HCT116 (cell line): ENCODE measurements at regions of chr11 and their contacts with region 1.

Region 1: GRCh38 chr11:35373284-35373933 is 45.9 kb downstream of the SLC1A2 start:
- DNase-seq: no peak
- ATAC-seq: peak; percentile 36
- H3K4me3 ChIP-seq: no peak overlapping the region
- H3K27ac ChIP-seq: no peak overlapping the region
- H3K4me1 ChIP-seq: peaks cover 8 to 12% of the 10 kb centered on the region in 2 experiments; a peak in 3 of 4 replicates
- H3K27me3 ChIP-seq: no peaks in the 10 kb centered on the region
- CTCF ChIP-seq: no peak
- POLR2A ChIP-seq: no peak
- RAD21 ChIP-seq: no peak

Region 2: DNA sequence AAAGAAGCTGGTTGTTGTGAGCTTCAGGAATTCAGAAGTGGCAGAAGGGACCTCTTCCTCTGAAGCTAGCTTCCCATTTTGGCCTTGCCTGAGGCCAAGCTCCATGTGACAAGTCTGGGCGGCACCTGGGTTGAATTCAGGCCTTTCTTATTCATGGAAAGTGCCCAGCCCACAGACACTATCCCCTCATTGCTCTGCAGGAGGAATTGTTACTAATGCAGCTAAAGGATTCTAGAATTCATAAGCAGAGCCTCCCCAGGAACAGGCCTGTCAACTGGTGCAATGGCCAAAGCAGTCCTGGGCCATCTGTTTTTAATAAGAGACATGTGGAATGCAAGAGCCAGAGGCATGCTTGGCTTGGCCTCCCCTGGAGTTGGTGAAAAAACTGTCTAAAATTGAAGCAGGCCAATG is 25.5 kb before region 1 on chr11:
- CTCF ChIA-PET with region 1: no interaction called
- POLR2A ChIA-PET with region 1: interaction called, 6 read pairs
- RAD21 ChIA-PET with region 1: interaction called in 1 of 2 experiments, 5 read pairs
- intact Hi-C with region 1: loop called (anchors 1 kb)
- DNase-seq: no peak
- ATAC-seq: no peak
- H3K4me3 ChIP-seq: no peak overlapping the region
- H3K27ac ChIP-seq: no peak overlapping the region
- H3K4me1 ChIP-seq: no peaks in the 10 kb centered on the region
- H3K27me3 ChIP-seq: no peaks in the 10 kb centered on the region
- CTCF ChIP-seq: no peak
- POLR2A ChIP-seq: no peak
- RAD21 ChIP-seq: no peak